ENCODE measurements at regions of chr15 and their contacts with region 1.

Region 1: GRCh38 chr15:84600851-84601838 is at the start of gene ZSCAN2:
- DNase-seq: peak; percentile 98
- H3K4me3 ChIP-seq: peak within 1 kb of the TSS; percentile 74
- H3K27ac ChIP-seq: peak within 1 kb of the TSS; percentile 79
- H3K4me1 ChIP-seq: peaks cover 10% of the 10 kb centered on the region
- H3K27me3 ChIP-seq: no peaks in the 10 kb centered on the region
- CTCF ChIP-seq: no peak
- total RNA-seq, gene ZSCAN2: 15.2 and 22.0 TPM in 2 replicates

Region 2: DNA sequence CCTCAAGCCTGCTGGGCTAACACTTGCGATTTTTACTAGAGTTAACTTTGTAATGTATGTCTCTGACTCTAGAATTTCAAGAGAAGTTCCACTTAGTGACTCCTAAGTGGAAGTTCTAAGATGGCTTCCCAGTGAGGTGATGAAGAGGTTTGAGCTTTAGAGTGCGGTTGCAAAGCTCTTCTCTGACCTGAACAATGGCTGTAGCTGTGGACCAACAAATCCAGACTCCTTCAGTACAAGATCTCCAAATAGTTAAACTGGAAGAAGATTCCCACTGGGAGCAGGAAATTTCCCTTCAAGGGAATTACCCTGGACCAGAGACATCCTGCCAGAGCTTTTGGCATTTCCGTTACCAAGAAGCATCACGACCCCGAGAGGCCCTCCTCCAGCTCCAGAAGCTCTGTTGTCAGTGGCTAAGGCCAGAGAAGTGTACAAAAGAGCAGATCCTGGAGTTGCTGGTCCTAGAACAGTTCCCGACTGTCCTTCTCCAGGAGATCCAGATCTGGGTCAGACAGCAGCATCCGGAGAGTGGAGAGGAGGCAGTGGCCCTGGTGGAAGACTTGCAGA is 30.6 kb after region 1 on chr15:
- CTCF ChIA-PET with region 1: interaction called, 9 read pairs
- POLR2A ChIA-PET with region 1: interaction called, 3 read pairs
- intact Hi-C with region 1: loop called (anchors 2 kb)
- DNase-seq: no peak
- H3K4me3 ChIP-seq: peak overlapping the region; percentile 55
- H3K27ac ChIP-seq: peak overlapping the region; percentile 26
- H3K4me1 ChIP-seq: peaks cover 16% of the 10 kb centered on the region
- H3K27me3 ChIP-seq: no peaks in the 10 kb centered on the region
- CTCF ChIP-seq: no peak